ENCODE measurements at regions of chr11 and their contacts with region 1.

Region 1: DNA sequence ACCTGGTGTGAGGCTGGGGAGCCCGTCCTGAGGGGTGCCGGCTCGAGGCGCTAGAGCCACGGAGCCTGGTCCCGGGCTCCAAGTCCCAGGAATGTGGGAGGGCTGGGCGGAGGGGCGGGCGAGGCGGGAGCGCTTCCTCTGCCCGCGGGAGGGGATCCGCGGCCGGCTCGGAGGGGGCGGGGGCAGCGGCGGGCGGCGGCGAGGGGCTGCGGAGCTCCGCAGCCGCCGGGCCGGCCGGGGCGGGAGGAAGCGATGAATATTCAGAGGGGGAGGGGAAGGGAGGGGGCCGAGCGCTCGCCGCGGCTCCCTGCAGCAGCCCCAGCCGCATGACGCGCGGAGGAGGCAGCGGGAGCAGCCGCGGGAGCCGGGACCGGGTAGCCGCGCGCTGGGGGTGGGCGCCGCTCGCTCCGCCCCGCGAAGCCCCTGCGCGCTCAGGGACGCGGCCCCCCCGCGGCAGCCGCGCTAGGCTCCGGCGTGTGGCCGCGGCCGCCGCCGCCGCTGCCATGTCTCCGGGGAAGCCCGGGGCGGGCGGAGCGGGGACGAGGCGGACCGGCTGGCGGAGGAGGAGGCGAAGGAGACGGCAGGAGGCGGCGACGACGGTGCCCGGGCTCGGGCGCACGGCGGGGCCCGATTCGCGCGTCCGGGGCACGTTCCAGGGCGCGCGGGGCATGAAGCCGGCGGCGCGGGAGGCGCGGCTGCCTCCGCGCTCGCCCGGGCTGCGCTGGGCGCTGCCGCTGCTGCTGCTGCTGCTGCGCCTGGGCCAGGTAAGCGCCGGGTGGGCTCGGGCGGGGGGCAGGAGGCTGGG is at the start of gene PTPRJ:
- DNase-seq: peak; percentile 46 to 94 (median 70)

Region 2: DNA sequence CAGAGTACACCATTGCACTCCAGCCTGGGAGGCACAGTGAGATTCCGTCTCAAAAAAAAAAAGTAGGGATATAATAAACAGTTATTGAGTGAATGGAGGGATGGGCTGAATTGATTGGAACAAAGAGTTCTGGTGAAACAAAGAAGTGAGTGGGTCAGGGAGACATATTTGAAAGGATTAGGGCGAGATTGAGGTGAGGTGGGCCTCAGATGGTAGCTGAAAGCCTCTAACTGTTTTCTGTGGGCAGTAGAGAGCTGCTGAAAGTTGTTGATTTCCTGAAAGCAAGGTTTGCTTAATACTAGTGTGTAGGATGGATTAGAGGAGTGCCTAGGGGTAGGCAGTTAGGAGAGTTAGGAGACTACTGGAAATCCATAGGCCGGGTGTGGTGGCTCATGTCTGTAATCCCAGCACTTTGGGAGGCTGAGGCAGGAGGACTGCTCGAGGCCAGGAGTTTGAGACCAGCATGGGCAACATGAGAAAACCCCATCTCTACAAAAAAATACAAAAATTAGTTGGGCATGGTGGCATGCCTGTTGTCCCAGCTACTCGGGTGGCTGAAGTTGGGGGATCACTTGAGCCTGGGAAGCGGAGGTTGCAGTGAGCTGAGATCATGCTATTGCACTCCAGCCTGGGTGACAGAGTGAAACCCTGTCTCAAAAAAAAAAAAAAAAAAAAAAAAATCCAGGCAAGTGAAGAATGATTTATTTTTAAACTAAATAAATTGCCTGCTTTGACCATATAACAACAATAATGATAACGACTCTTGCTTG is 41.5 kb before region 1 on chr11:
- intact Hi-C with region 1: loop called (anchors 5 kb)
- DNase-seq: no peak

Region 3: DNA sequence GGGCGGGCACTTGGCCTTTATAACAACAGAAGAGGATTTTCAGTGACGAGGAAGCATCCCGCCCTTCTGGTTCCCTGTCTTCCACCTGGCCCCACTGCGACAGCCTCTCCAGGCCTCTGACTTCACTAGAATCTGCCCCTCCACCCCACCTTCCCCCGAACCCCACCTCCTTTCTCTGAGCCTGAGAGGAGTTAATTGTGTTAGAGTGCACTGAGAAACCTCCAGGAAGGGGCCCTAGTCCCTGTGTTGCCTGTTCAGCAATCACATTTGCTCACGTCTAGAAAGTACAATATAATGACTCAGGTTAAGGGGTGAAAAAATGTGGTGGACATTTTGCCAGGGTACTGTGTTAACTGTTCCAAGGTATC is 38.8 kb after region 1 on chr11:
- intact Hi-C with region 1: loop called (anchors 5 kb)
- DNase-seq: no peak

Region 4: GRCh38 chr11:48034926-48035871 is 54.8 kb after region 1 on chr11:
- intact Hi-C with region 1: loop called (anchors 5 kb)
- DNase-seq: peak in 8 of 10 donors; percentile 30 to 88 (median 54)